ENCODE measurements at regions of chr9 and their contacts with region 1.

Region 1: GRCh38 chr9:94480205-94480604 is 74.7 kb upstream of the PCAT7 start:
- DNase-seq: no peak
- ATAC-seq: peak; percentile 23; the same call in 2 of the 3 replicates
- H3K4me3 ChIP-seq: no peak overlapping the region
- H3K27ac ChIP-seq: no peak overlapping the region
- H3K4me1 ChIP-seq: peaks cover 0 to 18% of the 10 kb centered on the region in 2 experiments; a peak in 1 of 5 replicates
- H3K27me3 ChIP-seq: no peaks in the 10 kb centered on the region; a peak in 1 of 5 replicates
- CTCF ChIP-seq: no peak
- EP300 ChIP-seq: no peak
- POLR2A ChIP-seq: no peak
- RAD21 ChIP-seq: no peak

Region 2: DNA sequence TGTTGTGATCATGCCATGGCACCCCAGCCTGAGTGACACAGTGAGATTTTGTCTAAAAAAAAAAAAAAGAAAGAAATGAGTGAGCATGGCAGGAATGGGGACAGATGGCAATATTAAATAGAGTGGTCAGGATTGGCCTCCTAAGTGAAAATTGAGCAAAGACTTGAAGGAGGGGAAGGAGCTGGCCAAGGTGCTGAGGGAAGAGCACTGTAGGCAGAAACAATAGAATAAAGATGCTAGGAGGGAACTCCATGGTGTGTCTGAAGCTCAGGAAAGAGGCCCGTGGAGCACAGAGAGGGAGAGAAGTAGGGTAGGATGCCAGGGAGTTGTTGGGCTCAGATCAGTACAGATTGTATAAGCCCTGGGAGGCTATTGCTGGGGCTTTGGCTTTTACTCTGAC is 10.3 kb after region 1 on chr9:
- CTCF ChIA-PET with region 1: no interaction called
- POLR2A ChIA-PET with region 1: interaction called, 14 read pairs
- in situ Hi-C with region 1: no loop called
- intact Hi-C with region 1: no loop called
- DNase-seq: peak in 1 of 4 experiments; percentile 6
- ATAC-seq: no peak
- H3K4me3 ChIP-seq: no peak overlapping the region
- H3K27ac ChIP-seq: no peak overlapping the region
- H3K4me1 ChIP-seq: no peaks in the 10 kb centered on the region
- H3K27me3 ChIP-seq: peaks cover 0 to 2% of the 10 kb centered on the region in 2 experiments; a peak in 2 of 5 replicates
- CTCF ChIP-seq: no peak
- EP300 ChIP-seq: no peak
- POLR2A ChIP-seq: no peak
- RAD21 ChIP-seq: no peak